HEK293 (cell line): ENCODE measurements at regions of chr3 and their contacts with region 1.

Region 1: GRCh38 chr3:141105828-141106628 is 54.9 kb downstream of the SPSB4 start:
- H3K4me3 ChIP-seq: no peak overlapping the region
- H3K27ac ChIP-seq: no peak overlapping the region
- H3K4me1 ChIP-seq: no peaks in the 10 kb centered on the region
- CTCF ChIP-seq: no peak

Region 2: DNA sequence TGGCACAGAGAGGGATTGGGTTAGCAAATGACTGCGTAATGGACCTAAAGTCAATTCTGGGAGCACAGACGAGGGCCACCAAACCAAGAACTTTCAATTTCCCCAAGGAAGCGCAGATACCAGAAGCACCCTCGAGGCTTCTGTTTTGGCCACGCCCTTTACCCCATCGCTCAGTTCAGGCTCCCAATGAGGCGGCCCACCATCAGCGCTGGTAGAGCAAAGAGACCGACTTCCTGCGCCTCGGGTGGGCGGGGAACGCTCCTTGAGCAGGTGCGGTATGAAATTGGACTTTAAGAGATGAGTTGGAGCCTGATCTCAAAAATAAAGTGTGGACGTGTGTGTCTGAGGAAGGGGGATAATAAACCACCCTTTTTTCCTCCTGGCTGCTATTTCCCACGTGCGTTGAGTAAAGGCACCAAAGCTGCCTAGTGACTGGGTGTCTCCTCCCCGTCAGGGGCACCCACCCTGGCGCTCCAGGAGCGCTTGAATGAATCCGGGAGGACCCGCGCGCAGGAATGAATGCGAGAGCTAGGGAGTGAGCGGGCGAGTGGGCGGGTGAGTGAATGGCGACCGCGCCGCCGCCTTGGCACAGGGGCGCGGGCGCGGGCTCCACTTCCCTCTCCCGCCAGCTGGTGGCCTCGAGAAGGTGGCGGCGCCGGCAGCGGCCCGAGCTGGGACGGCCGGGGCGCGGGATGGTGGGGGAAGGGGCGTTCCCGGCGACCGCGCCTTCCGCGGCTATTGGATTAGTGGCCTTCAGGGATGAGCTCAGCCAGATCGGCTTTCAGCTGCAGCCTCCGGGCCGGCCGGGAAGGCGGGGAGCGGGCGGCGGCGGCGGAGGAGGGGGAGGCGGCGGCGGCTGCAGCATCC is 55.2 kb before region 1 on chr3 and contains the start of gene SPSB4:
- CTCF ChIA-PET with region 1: interaction called, 19 read pairs
- POLR2A ChIA-PET with region 1: no interaction called
- H3K4me3 ChIP-seq: peak within 1 kb of the TSS; percentile 57
- H3K27ac ChIP-seq: peak within 1 kb of the TSS; percentile 8; the same call in 1 of the 2 replicates
- H3K4me1 ChIP-seq: no peaks in the 10 kb centered on the region
- CTCF ChIP-seq: no peak